ENCODE measurements at regions of chr17 and their contacts with region 1.

Region 1: DNA sequence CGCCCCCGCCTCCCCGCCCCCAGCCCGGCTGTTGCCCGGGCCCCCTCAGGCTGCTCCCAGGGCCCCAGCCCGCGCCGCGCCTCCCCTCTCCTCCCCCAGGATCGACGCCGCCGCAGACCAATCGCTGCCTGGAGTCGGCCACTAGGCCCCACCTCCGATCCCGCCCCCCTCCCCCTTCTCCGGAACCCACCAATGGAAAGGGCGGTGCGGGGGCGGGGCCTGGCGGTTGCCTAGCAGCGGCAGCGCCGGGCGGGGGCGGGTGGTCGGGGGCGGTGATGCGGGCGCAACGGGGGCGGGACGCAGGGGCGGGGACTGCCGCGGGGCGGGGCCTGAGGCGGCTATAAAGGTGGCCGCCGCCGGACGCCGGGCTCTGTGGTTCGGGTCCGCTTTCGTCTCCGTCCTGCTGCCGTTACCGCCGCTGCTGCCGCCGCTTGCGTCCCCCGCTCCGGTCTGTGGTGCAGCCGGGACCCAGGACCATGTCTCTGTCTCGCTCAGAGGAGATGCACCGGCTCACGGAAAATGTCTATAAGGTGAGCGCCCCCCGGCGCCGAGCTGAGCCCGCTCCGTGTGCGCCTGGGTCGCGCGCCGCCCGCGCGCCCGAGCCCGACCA is at the start of gene BAIAP2:
- DNase-seq: peak; percentile 96 to 99 (median 98)
- ATAC-seq: peak; percentile 66 to 81 (median 80)
- H3K4me3 ChIP-seq: peak within 1 kb of the TSS; percentile 51 to 89 (median 71)
- H3K27ac ChIP-seq: peak within 1 kb of the TSS; percentile 14 to 75 (median 66)
- H3K4me1 ChIP-seq: peaks cover 0 to 85% (median 62%) of the 10 kb centered on the region in 12 donors
- H3K27me3 ChIP-seq: peaks cover 0 to 6% (median 0%) of the 10 kb centered on the region in 9 donors
- CTCF ChIP-seq: peak in 3 of 12 donors; percentile 13 to 19 (median 13)
- POLR2A ChIP-seq: peak; percentile 86 to 99
- total RNA-seq, gene BAIAP2: 8.9 to 30.2 (median 18.8) TPM

Region 2: GRCh38 chr17:80991645-80992076 is 43.2 kb before region 1 on chr17 and contains the start of gene CHMP6:
- intact Hi-C with region 1: loop called in 1 of 10 experiments (anchors 5 kb)
- DNase-seq: peak; percentile 80 to 90 (median 87)
- ATAC-seq: peak in 3 of 4 donors; percentile 50 to 69 (median 69)
- H3K4me3 ChIP-seq: peak within 1 kb of the TSS; percentile 68 to 100 (median 96)
- H3K27ac ChIP-seq: peak within 1 kb of the TSS in 11 of 12 donors; percentile 41 to 86 (median 64)
- H3K4me1 ChIP-seq: peaks cover 0 to 40% (median 27%) of the 10 kb centered on the region in 12 donors
- H3K27me3 ChIP-seq: peaks cover 0 to 7% (median 0%) of the 10 kb centered on the region in 9 donors
- CTCF ChIP-seq: peak in 7 of 12 donors; percentile 28 to 48 (median 36)
- POLR2A ChIP-seq: peak in 1 of 2 donors; percentile 48
- total RNA-seq, gene CHMP6: 17.9 to 25.9 (median 19.4) TPM

Region 3: GRCh38 chr17:81002409-81003361 is 32.2 kb before region 1 on chr17:
- intact Hi-C with region 1: no loop called
- DNase-seq: peak in 4 of 5 donors; percentile 58 to 72 (median 66)
- ATAC-seq: peak; percentile 23 to 59 (median 46)
- H3K4me3 ChIP-seq: no peak overlapping the region
- H3K27ac ChIP-seq: no peak overlapping the region
- H3K4me1 ChIP-seq: peaks cover 0 to 37% (median 26%) of the 10 kb centered on the region in 12 donors
- H3K27me3 ChIP-seq: peaks cover 10 to 32% (median 16%) of the 10 kb centered on the region in 9 donors
- CTCF ChIP-seq: no peak
- POLR2A ChIP-seq: no peak

Region 4: DNA sequence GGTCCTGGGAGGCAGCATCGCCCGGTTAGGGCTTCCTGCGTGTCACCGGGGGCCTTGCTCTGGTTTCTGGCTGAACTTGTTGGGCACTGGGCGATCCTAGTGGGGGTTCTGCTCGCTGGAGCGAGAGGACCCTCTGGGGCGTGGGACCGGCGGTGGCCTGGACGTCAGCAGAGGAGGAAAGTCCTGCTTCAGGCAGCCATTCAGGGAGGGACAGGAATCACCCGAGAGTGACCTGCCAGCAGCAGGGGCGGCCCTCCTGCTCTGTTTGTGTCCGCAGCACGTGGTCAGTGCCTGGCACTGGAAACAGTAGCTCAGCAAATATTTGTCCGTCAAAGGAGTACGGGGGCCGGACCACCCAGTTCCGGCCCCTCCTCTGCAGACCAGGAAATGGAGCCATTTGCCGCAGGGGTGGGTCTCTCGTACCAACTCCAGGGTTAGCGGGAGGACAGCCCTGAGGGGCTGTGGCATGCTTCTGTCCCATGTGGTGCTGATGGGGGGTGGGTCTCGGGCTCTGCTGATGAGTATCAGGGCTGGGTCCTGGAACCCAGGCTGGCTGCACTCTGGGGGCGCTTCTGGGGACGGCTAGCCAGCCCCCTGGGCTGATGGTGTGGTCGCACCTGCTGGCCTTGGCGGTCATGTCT is 48.4 kb after region 1 on chr17:
- intact Hi-C with region 1: loop called in 2 of 10 experiments (anchors 5 kb)
- DNase-seq: peak in 3 of 5 donors; percentile 55 to 57 (median 56)
- ATAC-seq: peak; percentile 7 to 59 (median 26)
- H3K4me3 ChIP-seq: peak overlapping the region in 1 of 12 donors; percentile 9
- H3K27ac ChIP-seq: peak overlapping the region; percentile 15 to 81 (median 66)
- H3K4me1 ChIP-seq: peaks cover 0 to 48% (median 28%) of the 10 kb centered on the region in 12 donors
- H3K27me3 ChIP-seq: no peaks in the 10 kb centered on the region
- CTCF ChIP-seq: no peak
- POLR2A ChIP-seq: no peak

Region 5: GRCh38 chr17:81118308-81119221 is 83.7 kb after region 1 on chr17:
- intact Hi-C with region 1: no loop called
- DNase-seq: no peak
- ATAC-seq: no peak
- H3K4me3 ChIP-seq: peak overlapping the region in 3 of 12 donors; percentile 43 to 55 (median 49)
- H3K27ac ChIP-seq: no peak overlapping the region
- H3K4me1 ChIP-seq: peaks cover 0 to 18% (median 3%) of the 10 kb centered on the region in 12 donors
- H3K27me3 ChIP-seq: peaks cover 0 to 39% (median 0%) of the 10 kb centered on the region in 9 donors
- CTCF ChIP-seq: no peak
- POLR2A ChIP-seq: no peak